ENCODE measurements at regions of chr6 and their contacts with region 1.

Region 1: GRCh38 chr6:7878401-7878964 is 32.1 kb downstream of the TXNDC5 start:
- DNase-seq: no peak
- ATAC-seq: peak; percentile 40
- H3K4me3 ChIP-seq: no peak overlapping the region
- H3K27ac ChIP-seq: no peak overlapping the region
- H3K4me1 ChIP-seq: no peaks in the 10 kb centered on the region
- H3K27me3 ChIP-seq: peaks cover 0 to 6% of the 10 kb centered on the region in 2 experiments; a peak in 3 of 5 replicates
- CTCF ChIP-seq: no peak
- EP300 ChIP-seq: no peak
- POLR2A ChIP-seq: no peak
- RAD21 ChIP-seq: no peak

Region 2: DNA sequence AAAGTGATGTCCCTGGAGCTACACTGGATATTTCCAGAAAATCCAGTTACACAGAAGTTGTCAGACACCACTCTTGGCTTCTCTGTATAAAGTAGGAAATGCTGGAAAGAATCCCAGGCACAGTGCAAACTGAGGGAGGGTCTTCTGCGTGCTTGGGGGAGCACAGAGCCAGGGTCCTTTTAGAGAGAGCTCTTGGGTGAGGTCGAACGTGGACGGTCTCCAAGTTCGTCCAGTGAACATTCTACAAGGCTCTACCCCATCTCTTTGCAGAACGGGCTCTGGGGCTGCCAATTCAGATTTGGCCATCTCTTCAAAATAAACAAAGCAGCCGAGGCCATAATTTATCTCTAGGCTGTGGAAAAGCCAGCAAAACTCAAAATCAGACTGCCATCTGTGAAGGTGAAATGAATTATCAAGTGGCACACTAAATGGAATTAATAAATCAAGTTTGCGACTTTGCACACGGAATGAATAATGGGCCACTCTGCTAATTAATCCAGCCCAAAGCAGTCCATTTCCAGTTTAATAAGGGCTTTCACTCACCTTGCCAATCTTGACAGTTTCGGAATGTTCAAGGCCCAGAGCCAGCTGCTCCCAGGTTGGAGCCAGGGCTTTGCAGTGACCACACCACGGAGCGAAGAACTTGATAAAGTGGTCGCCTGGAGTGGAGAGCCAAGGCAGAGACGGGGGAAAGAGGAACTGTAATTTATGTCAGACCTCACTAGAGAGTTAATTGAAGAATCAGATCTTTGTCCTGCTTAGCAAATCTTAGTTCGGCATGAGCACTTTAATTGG is 12.8 kb after region 1 on chr6:
- CTCF ChIA-PET with region 1: no interaction called
- POLR2A ChIA-PET with region 1: interaction called, 12 read pairs
- in situ Hi-C with region 1: no loop called
- intact Hi-C with region 1: no loop called
- DNase-seq: no peak
- ATAC-seq: no peak
- H3K4me3 ChIP-seq: no peak overlapping the region
- H3K27ac ChIP-seq: no peak overlapping the region
- H3K4me1 ChIP-seq: no peaks in the 10 kb centered on the region
- H3K27me3 ChIP-seq: no peaks in the 10 kb centered on the region
- CTCF ChIP-seq: no peak
- EP300 ChIP-seq: no peak
- POLR2A ChIP-seq: no peak
- RAD21 ChIP-seq: no peak

Region 3: DNA sequence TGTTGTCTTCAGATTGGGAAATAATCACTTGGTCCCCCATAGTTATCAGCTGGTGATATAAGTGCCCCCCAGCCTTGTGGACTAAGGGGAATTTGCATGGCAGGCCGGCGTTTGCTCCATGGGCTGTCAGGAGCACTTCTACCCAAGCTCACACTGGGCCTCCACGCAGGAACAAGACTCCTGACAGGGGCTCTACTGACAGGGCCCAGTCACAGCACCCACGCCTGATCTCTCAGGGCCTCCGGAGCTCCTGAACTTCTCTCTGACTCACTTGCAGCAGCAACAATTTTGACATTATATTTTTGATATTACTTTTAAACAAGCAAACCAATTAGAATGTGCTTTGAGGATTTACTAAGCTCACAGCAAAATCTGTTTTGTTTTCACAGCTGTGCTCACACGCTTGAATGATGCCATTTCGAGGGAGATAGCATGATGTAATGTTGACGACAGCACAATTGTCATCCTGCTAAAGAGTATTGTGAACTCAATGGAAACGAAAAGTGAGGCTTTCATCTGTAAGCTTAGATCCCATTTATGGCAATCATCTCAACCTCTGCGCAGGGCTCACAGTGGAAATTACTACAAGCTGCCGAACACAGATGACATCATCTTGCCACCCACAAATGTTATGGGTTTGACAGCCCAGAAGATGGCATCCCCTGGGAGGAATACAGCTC is 60.8 kb after region 1 on chr6:
- CTCF ChIA-PET with region 1: no interaction called
- POLR2A ChIA-PET with region 1: no interaction called
- in situ Hi-C with region 1: no loop called
- intact Hi-C with region 1: no loop called
- DNase-seq: no peak
- ATAC-seq: no peak; the same call in 2 of the 3 replicates
- H3K4me3 ChIP-seq: no peak overlapping the region
- H3K27ac ChIP-seq: no peak overlapping the region
- H3K4me1 ChIP-seq: no peaks in the 10 kb centered on the region; a peak in 1 of 5 replicates
- H3K27me3 ChIP-seq: peaks cover 8 to 35% of the 10 kb centered on the region in 2 experiments; a peak in 3 of 5 replicates
- CTCF ChIP-seq: no peak
- EP300 ChIP-seq: no peak
- POLR2A ChIP-seq: no peak
- RAD21 ChIP-seq: no peak

Measured in K562 (cell line).